ENCODE measurements at regions of chr1 and their contacts with region 1.

Region 1: GRCh38 chr1:203290261-203291089 is 14.8 kb upstream of the BTG2 start:
- DNase-seq: peak; percentile 99
- H3K4me3 Mint-ChIP-seq: peak overlapping the region; percentile 76
- H3K27ac Mint-ChIP-seq: peak overlapping the region; percentile 100
- H3K4me1 Mint-ChIP-seq: peaks cover 80% of the 10 kb centered on the region
- H3K27me3 Mint-ChIP-seq: no peaks in the 10 kb centered on the region

Region 2: DNA sequence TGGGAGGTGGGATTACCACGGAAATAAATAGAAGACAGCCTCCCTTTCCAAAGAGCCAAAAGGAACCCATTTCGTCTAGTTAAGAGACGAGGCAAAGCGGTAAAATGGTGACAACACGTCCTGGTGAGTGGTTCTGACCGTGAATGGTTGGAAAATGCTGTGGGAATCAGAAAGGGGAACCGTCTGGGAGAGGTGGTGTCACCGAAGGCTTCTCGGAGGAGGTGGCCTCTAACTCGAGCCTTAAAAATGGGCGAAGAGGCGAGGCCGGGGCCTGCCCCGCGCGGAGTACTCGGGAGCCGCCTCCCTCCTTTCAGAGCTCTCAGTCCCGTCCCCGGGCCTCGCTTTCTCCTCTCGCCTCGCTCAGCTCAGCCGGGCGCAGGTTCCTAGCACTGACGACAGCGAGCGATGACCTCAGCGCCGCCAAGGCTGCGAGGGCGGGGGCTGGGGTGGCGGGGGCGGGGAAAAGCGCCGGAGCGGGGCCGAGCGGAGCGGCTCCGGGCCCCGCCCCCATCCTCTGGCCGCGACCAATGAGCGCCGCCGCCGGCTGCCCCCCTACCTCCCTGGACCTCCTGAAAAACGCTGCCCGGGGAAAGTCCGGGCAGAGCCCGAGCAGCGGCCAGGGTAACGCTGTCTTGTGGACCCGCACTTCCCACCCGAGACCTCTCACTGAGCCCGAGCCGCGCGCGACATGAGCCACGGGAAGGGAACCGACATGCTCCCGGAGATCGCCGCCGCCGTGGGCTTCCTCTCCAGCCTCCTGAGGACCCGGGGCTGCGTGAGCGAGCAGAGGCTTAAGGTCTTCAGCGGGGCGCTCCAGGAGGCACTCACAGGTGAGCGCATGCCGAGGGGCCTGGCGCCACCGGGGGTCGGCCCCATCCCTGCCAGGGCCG is 14.7 kb after region 1 on chr1 and contains the start of gene BTG2:
- CTCF ChIA-PET with region 1: interaction called, 22 read pairs
- DNase-seq: peak; percentile 94
- H3K4me3 Mint-ChIP-seq: peak within 1 kb of the TSS; percentile 86
- H3K27ac Mint-ChIP-seq: peak within 1 kb of the TSS; percentile 90
- H3K4me1 Mint-ChIP-seq: peaks cover 61% of the 10 kb centered on the region
- H3K27me3 Mint-ChIP-seq: no peaks in the 10 kb centered on the region